ENCODE measurements at regions of chr18 and their contacts with region 1.

Region 1: DNA sequence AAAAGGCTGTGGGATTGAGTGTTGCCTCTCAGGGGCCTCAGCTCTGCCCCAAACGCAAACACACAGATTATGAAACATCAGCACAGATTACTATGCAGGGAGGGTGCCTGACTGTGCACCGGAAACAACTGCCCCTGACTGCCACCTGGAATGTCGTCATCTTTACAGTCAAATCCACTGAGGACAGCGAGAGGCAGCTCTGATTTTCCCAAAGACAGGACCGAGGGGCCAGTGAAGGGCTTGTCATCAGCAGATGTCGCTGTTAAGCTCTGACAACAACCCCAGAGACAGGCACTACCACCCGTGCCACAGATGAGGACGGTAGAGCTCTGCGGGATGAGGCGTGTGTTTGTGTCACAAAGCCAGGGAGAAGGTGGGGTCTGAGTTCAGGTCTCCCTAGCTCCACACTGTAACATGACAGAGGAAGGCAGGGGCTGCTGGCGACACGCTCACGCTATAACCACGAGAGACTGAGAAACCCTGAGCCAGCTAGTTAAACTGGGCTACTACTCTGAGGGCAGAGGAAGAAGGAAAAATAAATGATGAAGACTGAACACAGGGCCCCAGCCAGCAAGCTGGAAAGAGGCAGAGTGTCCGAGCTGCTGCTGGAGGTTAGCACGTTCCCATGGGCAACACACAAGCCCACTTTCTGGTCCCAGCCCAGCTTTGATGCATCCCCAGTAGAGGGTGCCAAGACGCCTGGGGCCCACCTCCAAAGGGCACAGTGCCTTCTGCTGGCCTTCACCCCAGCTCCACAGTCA is 47.0 kb downstream of the PARD6G start:
- DNase-seq: peak; percentile 41
- ATAC-seq: peak; percentile 62
- H3K4me3 Mint-ChIP-seq: no peak overlapping the region
- H3K27ac Mint-ChIP-seq: peak overlapping the region; percentile 12; the same call in 1 of the 2 replicates
- H3K4me1 Mint-ChIP-seq: peaks cover 64% of the 10 kb centered on the region
- H3K27me3 Mint-ChIP-seq: no peaks in the 10 kb centered on the region
- CTCF ChIP-seq: no peak

Region 2: DNA sequence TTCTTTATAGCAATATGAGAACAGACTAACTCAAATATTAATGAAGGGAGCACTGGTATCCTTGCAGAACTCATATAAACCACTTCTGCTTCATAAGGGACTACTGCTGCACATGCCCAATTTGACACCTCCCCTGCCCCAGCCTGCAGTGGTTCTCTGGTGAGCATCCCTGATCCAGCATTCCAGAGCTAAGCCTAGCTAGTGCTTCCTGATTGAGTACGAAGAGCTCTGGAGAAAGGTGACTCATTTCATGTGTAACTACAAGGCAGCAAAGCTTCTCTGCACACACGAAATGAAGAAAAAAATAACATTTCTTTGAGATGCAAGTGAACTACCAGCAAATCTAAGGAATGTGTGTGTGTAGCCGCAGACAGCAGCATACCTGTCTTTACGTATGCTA is 114.1 kb before region 1 on chr18:
- CTCF ChIA-PET with region 1: no interaction called
- POLR2A ChIA-PET with region 1: no interaction called
- DNase-seq: no peak
- ATAC-seq: no peak
- H3K4me3 Mint-ChIP-seq: no peak overlapping the region
- H3K27ac Mint-ChIP-seq: no peak overlapping the region
- H3K4me1 Mint-ChIP-seq: no peaks in the 10 kb centered on the region
- H3K27me3 Mint-ChIP-seq: peaks cover 6% of the 10 kb centered on the region; the same call in 1 of the 2 replicates
- CTCF ChIP-seq: no peak

Region 3: DNA sequence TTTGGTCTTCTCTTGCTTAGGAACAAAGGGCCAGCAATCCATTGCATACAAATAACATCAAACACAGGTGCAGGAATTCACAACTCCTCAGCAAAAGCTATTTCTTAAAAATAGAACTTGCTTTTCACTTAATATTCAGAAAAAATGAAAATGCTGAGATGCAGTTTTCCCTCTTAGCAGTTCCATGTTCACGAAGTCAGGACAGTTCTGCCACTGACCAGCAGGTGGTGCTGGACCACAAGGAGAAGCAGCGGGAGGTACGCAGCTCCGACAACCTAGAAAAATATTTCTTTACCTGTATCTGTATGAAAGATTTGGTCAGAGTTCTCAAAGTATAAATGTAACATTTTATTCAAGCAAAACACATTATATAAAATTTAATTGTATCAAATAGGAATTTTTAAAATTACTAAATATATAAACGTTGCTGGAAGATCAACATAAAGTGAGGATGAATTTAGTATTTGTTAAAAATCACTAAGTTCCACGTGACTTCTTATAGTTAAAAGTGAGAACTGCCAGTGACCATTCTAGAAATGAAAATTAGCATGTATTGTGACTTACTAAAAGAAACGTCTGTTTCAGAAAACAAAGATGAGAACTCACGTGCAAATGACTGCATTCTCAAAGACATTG is 42.5 kb before region 1 on chr18:
- CTCF ChIA-PET with region 1: interaction called, 19 read pairs
- POLR2A ChIA-PET with region 1: no interaction called
- DNase-seq: peak; percentile 79
- ATAC-seq: peak; percentile 37; the same call in 1 of the 2 replicates
- H3K4me3 Mint-ChIP-seq: no peak overlapping the region
- H3K27ac Mint-ChIP-seq: no peak overlapping the region
- H3K4me1 Mint-ChIP-seq: no peaks in the 10 kb centered on the region; the same call in 1 of the 2 replicates
- H3K27me3 Mint-ChIP-seq: no peaks in the 10 kb centered on the region
- CTCF ChIP-seq: peak; percentile 82

Region 4: GRCh38 chr18:80183273-80184050 is 16.9 kb before region 1 on chr18:
- CTCF ChIA-PET with region 1: interaction called, 14 read pairs
- POLR2A ChIA-PET with region 1: no interaction called
- DNase-seq: no peak
- ATAC-seq: no peak
- H3K4me3 Mint-ChIP-seq: no peak overlapping the region
- H3K27ac Mint-ChIP-seq: no peak overlapping the region
- H3K4me1 Mint-ChIP-seq: peaks cover 7% of the 10 kb centered on the region
- H3K27me3 Mint-ChIP-seq: no peaks in the 10 kb centered on the region
- CTCF ChIP-seq: no peak

Region 5: DNA sequence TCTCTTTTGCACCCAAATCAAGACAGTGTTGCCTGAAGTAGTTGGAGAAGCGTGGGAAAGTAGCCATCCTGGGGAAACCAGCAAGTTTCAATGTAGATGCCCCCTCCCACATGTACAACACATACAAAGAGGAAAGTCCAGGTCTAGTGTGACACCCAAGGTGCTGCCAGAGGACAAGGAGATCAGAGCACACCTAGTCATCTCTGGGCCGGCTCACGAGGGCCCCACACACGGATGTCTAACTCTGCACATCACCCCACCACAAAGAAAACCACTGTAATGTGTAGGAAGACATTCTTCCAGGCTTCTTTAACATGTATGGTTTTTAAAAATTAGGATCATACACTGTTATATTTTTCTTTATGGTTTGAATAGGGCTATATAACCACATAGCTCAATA is 25.3 kb after region 1 on chr18:
- CTCF ChIA-PET with region 1: interaction called, 12 read pairs
- POLR2A ChIA-PET with region 1: no interaction called
- DNase-seq: no peak
- ATAC-seq: no peak
- H3K4me3 Mint-ChIP-seq: no peak overlapping the region
- H3K27ac Mint-ChIP-seq: no peak overlapping the region
- H3K4me1 Mint-ChIP-seq: peaks cover 16% of the 10 kb centered on the region
- H3K27me3 Mint-ChIP-seq: no peaks in the 10 kb centered on the region
- CTCF ChIP-seq: no peak

Region 6: DNA sequence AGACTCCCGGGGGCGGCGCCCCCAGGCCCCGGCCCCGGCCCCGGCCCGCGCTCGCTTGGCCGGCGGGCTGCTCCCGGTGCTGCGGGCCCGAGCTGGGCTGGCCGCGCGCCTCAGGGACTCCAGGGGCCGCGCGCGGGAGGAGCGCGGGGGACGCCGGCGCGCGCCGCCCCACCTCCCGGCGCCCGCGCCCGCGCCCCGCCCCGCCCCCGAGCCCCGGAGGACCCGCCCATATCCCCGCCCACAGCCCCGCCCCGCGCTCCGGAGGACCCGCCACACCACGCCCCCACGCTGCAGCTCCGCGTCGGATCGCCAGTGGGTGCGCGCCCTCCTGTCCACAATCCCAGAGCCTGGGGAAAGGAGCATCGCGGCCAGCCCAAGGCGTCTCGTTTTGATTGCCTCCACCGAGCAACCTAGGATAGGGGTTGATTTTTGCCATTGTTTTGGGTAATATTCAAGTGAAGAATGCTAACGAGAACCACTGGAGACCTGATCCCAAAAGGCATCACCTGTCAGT is 47.1 kb after region 1 on chr18 and contains the start of gene PARD6G:
- CTCF ChIA-PET with region 1: interaction called, 13 read pairs
- POLR2A ChIA-PET with region 1: interaction called, 5 read pairs
- DNase-seq: peak; percentile 70
- ATAC-seq: peak; percentile 43
- H3K4me3 Mint-ChIP-seq: peak within 1 kb of the TSS; percentile 72
- H3K27ac Mint-ChIP-seq: no peak within 1 kb of the TSS
- H3K4me1 Mint-ChIP-seq: no peaks in the 10 kb centered on the region
- H3K27me3 Mint-ChIP-seq: peaks cover 38% of the 10 kb centered on the region
- CTCF ChIP-seq: no peak
- total RNA-seq, gene PARD6G: 13.0 to 14.4 TPM (median 13.6 TPM) in 3 replicates

Measured in WTC11 (cell line).